MCF 10A (cell line): ENCODE measurements at regions of chr14 and their contacts with region 1.

Region 1: DNA sequence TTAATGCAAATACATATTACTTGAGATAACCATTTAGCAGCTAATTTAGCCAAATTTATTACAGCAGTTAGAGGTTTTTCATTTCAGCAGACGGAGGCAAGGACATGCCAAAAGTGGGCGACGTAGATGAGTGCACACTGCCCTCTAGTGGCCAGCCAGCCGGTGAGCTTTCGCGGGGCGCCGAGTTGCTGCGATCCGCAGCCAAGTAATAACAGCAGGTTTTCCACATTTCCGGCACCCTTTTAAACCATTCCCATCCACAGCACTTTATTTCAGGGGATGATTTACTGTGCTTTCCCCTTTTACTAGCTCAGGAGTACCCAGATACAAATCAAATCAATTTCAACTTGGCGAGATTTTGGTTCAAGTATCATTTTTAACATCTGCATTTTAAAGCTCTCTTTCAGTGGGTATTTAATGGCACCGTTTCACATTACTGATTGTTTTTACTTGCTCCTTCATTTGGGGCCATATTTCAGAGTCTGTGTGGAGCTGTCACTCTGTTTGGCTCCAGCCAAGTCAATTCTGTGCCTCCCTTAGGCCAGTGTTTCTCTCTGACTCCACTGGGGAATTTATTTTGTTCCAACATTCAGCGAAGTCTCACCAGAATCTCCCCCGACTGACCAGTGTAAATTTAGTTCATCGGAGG is 158.0 kb downstream of the EGLN3 start:
- DNase-seq: peak; percentile 64
- H3K4me3 Mint-ChIP-seq: peak overlapping the region; percentile 17
- H3K27ac Mint-ChIP-seq: no peak overlapping the region
- H3K4me1 Mint-ChIP-seq: no peaks in the 10 kb centered on the region
- H3K27me3 Mint-ChIP-seq: no peaks in the 10 kb centered on the region
- CTCF ChIP-seq: peak; percentile 93

Region 2: DNA sequence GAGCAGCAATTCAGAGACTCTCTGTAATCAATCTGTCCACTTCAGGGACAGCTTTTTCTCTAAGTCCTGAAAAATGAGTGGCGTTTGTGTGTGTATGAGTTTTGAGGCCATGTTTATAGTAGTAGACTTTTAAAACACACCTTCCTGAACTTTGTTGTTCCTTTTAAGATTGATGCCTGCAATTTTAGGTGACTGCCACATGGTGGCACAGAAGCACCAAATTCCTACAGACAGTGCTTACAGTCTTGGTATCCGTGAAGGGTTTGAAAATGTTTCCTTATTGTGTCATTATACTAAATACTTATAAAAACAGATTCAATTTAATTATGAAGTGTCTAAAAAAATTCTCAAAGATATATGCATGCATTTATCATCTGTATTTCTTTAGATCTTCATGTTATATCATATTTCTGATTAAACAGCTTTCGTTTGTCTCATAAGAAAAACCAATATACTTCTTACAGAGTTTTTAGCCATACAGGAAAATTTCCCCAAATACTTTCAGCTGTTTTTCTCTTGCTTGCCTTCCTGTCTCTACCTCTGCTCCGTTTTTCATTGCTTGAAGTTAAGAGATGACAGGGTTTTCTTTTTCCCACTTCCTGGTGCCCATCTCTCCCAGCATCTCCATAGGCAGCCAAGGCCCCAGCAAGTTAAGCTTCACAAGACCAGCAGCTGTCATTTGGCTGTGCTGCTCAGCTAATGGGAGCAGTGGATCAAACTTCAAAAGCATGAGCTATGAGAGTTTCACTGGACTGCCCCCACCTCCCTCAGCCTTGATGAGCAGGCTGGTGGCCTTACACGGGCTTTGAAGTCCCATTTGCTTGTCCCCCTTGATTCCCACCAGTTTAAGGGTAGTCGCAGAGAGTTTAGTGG is 1204.2 kb before region 1 on chr14:
- CTCF ChIA-PET with region 1: interaction called, 28 read pairs
- POLR2A ChIA-PET with region 1: interaction called, 4 read pairs
- intact Hi-C with region 1: no loop called
- DNase-seq: peak; percentile 67
- H3K4me3 Mint-ChIP-seq: no peak overlapping the region
- H3K27ac Mint-ChIP-seq: no peak overlapping the region
- H3K4me1 Mint-ChIP-seq: peaks cover 9% of the 10 kb centered on the region
- H3K27me3 Mint-ChIP-seq: no peaks in the 10 kb centered on the region
- CTCF ChIP-seq: peak; percentile 84

Region 3: GRCh38 chr14:33184587-33184986 is 608.3 kb before region 1 on chr14:
- CTCF ChIA-PET with region 1: no interaction called
- POLR2A ChIA-PET with region 1: no interaction called
- intact Hi-C with region 1: loop called (anchors 1 kb)
- DNase-seq: peak; percentile 20
- H3K4me3 Mint-ChIP-seq: no peak overlapping the region
- H3K27ac Mint-ChIP-seq: no peak overlapping the region
- H3K4me1 Mint-ChIP-seq: no peaks in the 10 kb centered on the region
- H3K27me3 Mint-ChIP-seq: no peaks in the 10 kb centered on the region
- CTCF ChIP-seq: peak; percentile 22

Region 4: GRCh38 chr14:33432407-33433023 is 360.3 kb before region 1 on chr14:
- CTCF ChIA-PET with region 1: interaction called, 13 read pairs
- POLR2A ChIA-PET with region 1: no interaction called
- intact Hi-C with region 1: loop called (anchors 2 kb)
- DNase-seq: peak; percentile 56
- H3K4me3 Mint-ChIP-seq: no peak overlapping the region
- H3K27ac Mint-ChIP-seq: no peak overlapping the region
- H3K4me1 Mint-ChIP-seq: peaks cover 13% of the 10 kb centered on the region
- H3K27me3 Mint-ChIP-seq: no peaks in the 10 kb centered on the region
- CTCF ChIP-seq: peak; percentile 53

Region 5: GRCh38 chr14:33676135-33676566 is 116.7 kb before region 1 on chr14:
- CTCF ChIA-PET with region 1: interaction called, 9 read pairs
- POLR2A ChIA-PET with region 1: interaction called, 3 read pairs
- intact Hi-C with region 1: loop called (anchors 1 kb)
- DNase-seq: peak; percentile 61
- H3K4me3 Mint-ChIP-seq: no peak overlapping the region
- H3K27ac Mint-ChIP-seq: no peak overlapping the region
- H3K4me1 Mint-ChIP-seq: peaks cover 11% of the 10 kb centered on the region
- H3K27me3 Mint-ChIP-seq: no peaks in the 10 kb centered on the region
- CTCF ChIP-seq: no peak

Region 6: DNA sequence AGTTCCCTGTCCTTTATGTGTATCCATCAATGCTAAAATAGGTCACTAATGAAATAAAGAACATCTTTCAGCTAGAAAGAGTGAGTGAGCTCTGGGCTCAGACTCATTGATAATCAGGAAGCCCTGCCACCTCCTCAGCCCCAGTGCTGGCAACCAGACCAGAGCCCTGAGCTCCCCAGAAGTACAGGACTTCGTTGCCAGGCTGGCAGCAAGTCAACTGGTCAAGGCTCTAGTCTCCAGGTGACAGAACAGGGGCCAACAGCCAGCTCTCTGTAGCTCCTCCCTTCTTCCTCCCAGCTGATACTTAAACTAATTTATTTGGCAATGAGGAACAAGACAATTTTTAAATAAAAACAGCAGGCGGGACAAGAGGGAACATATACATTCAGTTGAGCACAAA is 12.7 kb after region 1 on chr14:
- CTCF ChIA-PET with region 1: interaction called, 38 read pairs
- POLR2A ChIA-PET with region 1: no interaction called
- intact Hi-C with region 1: no loop called
- DNase-seq: no peak
- H3K4me3 Mint-ChIP-seq: no peak overlapping the region
- H3K27ac Mint-ChIP-seq: no peak overlapping the region
- H3K4me1 Mint-ChIP-seq: no peaks in the 10 kb centered on the region
- H3K27me3 Mint-ChIP-seq: no peaks in the 10 kb centered on the region
- CTCF ChIP-seq: no peak

Region 7: DNA sequence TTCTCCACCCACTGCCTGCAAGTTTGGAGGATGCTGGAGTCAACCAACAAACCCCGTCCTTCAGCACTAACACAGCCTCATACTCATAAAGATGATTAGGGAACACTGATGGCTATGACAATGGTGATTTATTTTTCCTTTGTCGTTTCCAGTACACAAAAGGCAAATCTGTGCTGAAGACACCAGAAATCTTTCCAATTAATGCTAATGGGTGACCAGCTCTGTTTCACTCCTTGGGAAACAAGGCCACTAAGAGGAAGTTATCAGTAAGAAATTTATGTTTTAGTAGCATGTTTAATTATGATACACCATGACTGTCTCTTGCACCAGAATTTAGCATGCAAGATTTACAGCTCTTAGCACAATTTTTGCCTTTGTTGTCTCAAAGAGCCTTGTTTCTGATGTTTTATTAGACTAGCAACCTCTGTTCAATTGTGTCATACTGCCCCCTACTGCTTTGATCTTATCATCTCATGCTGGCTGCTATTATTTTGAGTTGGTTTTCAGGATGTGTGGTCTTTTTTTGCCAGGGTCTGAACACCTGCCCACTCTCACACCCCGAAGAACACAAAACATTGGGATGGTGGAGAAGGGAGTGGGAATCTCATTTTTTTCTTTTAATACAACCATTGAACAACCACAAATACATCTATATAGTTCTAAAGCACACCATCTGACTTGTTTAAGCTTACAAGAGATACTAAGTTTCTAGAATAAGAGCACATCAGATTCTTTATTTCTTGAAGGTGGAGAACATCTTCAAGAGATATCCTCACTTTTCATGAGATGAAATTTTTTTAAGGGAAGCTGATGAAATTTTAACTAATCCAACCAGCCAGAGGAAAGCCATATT is 508.3 kb after region 1 on chr14:
- CTCF ChIA-PET with region 1: interaction called, 13 read pairs
- POLR2A ChIA-PET with region 1: no interaction called
- intact Hi-C with region 1: no loop called
- DNase-seq: peak; percentile 73
- H3K4me3 Mint-ChIP-seq: no peak overlapping the region
- H3K27ac Mint-ChIP-seq: peak overlapping the region; percentile 57
- H3K4me1 Mint-ChIP-seq: peaks cover 18% of the 10 kb centered on the region
- H3K27me3 Mint-ChIP-seq: no peaks in the 10 kb centered on the region
- CTCF ChIP-seq: peak; percentile 76